Activated CD4-positive, alpha-beta T cell treated with anti-CD3 and anti-CD28 coated beads for 36 hours (primary cell): ENCODE measurements at regions of chr16 and their contacts with region 1.

Region 1: GRCh38 chr16:72832621-72833248 is 215.2 kb downstream of the ZFHX3 start:
- DNase-seq: peak; percentile 82
- ATAC-seq: peak; percentile 63
- H3K4me3 Mint-ChIP-seq: no peak overlapping the region
- H3K27ac Mint-ChIP-seq: no peak overlapping the region
- H3K4me1 Mint-ChIP-seq: no peaks in the 10 kb centered on the region
- H3K27me3 Mint-ChIP-seq: no peaks in the 10 kb centered on the region

Region 2: GRCh38 chr16:72400257-72400882 is 432.4 kb before region 1 on chr16:
- CTCF ChIA-PET with region 1: interaction called, 3 read pairs
- POLR2A ChIA-PET with region 1: no interaction called
- intact Hi-C with region 1: loop called in 1 of 2 experiments (anchors 1 kb)
- DNase-seq: peak; percentile 41
- ATAC-seq: peak; percentile 53
- H3K4me3 Mint-ChIP-seq: no peak overlapping the region
- H3K27ac Mint-ChIP-seq: no peak overlapping the region
- H3K4me1 Mint-ChIP-seq: no peaks in the 10 kb centered on the region
- H3K27me3 Mint-ChIP-seq: no peaks in the 10 kb centered on the region

Region 3: DNA sequence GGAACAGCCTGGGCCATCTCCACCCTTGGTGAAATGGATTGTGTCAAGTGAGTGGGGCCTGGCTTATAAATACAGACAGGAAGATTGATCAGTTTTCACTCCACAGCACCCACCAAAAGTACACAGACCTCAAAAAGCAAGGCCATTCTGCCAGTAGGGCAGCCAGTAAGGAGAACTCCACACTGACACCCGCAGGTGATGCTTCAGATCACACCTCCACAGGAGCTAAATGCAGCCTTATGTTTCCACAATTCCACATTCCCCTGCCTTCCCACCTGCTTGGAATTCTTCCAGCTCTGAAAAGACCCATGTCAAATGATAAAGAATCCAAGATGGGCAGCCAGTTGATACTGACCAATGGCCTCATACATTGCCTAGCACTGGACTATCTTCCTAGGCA is 24.1 kb after region 1 on chr16:
- CTCF ChIA-PET with region 1: interaction called, 17 read pairs
- POLR2A ChIA-PET with region 1: no interaction called
- intact Hi-C with region 1: no loop called
- DNase-seq: peak; percentile 48
- ATAC-seq: peak; percentile 49
- H3K4me3 Mint-ChIP-seq: no peak overlapping the region
- H3K27ac Mint-ChIP-seq: no peak overlapping the region
- H3K4me1 Mint-ChIP-seq: no peaks in the 10 kb centered on the region
- H3K27me3 Mint-ChIP-seq: peaks cover 4% of the 10 kb centered on the region

Region 4: DNA sequence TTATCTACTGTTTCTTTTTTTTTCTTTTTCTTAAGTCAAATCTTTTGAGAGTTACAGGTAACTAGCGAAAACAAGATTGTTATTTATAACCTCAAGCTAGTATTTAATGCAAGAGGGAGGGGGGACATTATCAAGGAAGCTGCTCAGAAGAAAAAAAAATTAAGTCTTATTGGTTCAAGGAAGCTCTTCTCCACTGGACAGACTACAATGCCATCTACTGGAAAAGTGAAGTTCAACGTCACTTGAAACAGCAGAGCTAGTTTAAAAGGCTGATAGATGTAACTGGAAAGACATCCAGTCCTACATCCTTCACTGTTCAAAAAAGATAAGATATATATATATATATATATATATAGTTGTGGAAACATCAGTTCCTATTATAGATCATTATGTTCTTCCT is 1045.9 kb after region 1 on chr16:
- CTCF ChIA-PET with region 1: interaction called, 5 read pairs
- POLR2A ChIA-PET with region 1: no interaction called
- intact Hi-C with region 1: loop called in 1 of 2 experiments (anchors 10 kb)
- DNase-seq: no peak
- ATAC-seq: no peak
- H3K4me3 Mint-ChIP-seq: no peak overlapping the region
- H3K27ac Mint-ChIP-seq: no peak overlapping the region
- H3K4me1 Mint-ChIP-seq: no peaks in the 10 kb centered on the region
- H3K27me3 Mint-ChIP-seq: peaks cover under 1% of the 10 kb centered on the region

Region 5: GRCh38 chr16:74275002-74275636 is 1442.4 kb after region 1 on chr16:
- CTCF ChIA-PET with region 1: no interaction called
- POLR2A ChIA-PET with region 1: no interaction called
- intact Hi-C with region 1: loop called in 1 of 2 experiments (anchors 10 kb)
- DNase-seq: no peak
- ATAC-seq: no peak
- H3K4me3 Mint-ChIP-seq: no peak overlapping the region
- H3K27ac Mint-ChIP-seq: no peak overlapping the region
- H3K4me1 Mint-ChIP-seq: no peaks in the 10 kb centered on the region
- H3K27me3 Mint-ChIP-seq: peaks cover 5% of the 10 kb centered on the region